Right ventricle myocardium superior (tissue), 1 donor: ENCODE measurements at regions of chr16 and their contacts with region 1.

Region 1: GRCh38 chr16:30984669-30985400 is at the start of gene HSD3B7:
- DNase-seq: peak; percentile 95
- ATAC-seq: peak; percentile 94
- total RNA-seq, gene HSD3B7: 6.7 TPM

Region 2: GRCh38 chr16:31064882-31065461 is 80.1 kb after region 1 on chr16:
- intact Hi-C with region 1: no loop called
- DNase-seq: peak; percentile 73
- ATAC-seq: peak; percentile 85

Region 3: GRCh38 chr16:31142109-31143010 is 157.5 kb after region 1 on chr16:
- intact Hi-C with region 1: loop called (anchors 10 kb)
- DNase-seq: peak; percentile 99
- ATAC-seq: peak; percentile 96

Region 4: DNA sequence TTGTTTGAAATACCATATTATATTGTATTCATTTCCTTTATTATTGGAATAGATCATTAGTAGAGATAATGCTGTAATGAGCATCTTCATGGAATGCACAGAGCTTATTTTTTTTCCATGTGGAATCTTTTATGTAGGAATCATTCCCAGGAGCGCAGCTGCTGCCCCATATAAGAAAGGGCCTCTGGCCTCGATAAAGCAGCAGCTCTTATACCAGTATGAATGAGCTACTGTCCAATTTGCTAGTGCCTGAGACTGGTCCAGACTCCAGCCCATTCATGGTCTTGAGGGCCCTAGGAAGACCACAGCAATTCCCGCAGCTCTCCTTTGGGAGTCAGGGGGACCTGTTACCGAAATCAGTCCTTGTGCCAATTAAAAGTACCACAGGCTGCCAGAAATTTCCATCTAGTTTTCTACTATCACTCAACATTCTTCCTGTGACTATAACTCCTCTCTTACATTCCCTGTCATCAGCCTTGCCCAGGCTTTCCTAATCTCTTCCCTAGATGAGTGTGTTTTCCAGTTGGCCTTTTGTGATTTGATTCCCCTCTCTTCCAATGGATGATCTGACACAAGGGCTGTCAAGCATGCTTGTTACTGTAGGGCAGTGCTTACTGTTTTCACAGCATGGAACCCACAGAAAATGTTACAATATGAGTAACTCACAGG is 455.8 kb after region 1 on chr16:
- intact Hi-C with region 1: loop called (anchors 5 kb)
- DNase-seq: no peak
- ATAC-seq: no peak

Region 5: GRCh38 chr16:31868691-31869167 is 883.9 kb after region 1 on chr16:
- intact Hi-C with region 1: loop called (anchors 10 kb)
- DNase-seq: peak; percentile 79
- ATAC-seq: peak; percentile 84